ENCODE measurements at regions of chr17 and their contacts with region 1.

Region 1: DNA sequence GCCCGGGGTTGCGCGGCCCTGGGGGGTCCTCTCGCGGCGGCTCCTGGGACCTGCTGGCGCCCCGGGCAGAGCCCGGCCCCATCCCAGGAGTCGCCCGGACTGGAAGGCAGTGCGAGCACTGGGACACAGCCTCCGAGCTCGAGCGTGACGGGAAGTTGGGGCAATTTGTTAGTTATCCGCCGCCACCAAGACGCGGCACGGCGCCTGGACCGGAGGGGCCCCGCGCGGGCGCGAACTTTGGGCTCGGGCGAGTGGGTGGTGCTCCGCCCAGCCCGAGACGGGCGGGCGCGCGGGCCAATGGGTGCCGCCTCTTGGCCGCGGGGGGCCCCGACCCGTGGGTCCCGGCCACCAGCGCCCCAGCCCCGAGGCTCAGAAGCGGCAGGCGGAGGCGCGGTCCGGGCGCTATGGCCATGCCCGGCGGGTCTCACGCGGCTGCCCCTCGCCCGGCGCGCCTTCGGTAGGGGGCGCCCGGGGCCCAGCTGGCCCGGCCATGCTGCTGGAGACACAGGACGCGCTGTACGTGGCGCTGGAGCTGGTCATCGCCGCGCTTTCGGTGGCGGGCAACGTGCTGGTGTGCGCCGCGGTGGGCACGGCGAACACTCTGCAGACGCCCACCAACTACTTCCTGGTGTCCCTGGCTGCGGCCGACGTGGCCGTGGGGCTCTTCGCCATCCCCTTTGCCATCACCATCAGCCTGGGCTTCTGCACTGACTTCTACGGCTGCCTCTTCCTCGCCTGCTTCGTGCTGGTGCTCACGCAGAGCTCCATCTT is at the start of gene ADORA2B:
- DNase-seq: no peak
- H3K4me3 ChIP-seq: peak within 1 kb of the TSS; percentile 57 to 70 (median 64)
- H3K27ac ChIP-seq: peak within 1 kb of the TSS in 1 of 4 donors; percentile 23
- H3K4me1 ChIP-seq: peaks cover 17 to 39% (median 34%) of the 10 kb centered on the region in 4 donors
- H3K27me3 ChIP-seq: peaks cover 0 to 42% (median 4%) of the 10 kb centered on the region in 4 donors
- CTCF ChIP-seq: peak; percentile 33 to 51 (median 39)
- EP300 ChIP-seq: no peak
- POLR2A ChIP-seq: no peak
- total RNA-seq, gene ADORA2B: 0.26 to 0.75 (median 0.37) TPM

Region 2: GRCh38 chr17:15999439-16000350 is 54.8 kb after region 1 on chr17 and contains the starts of genes TTC19 and ZSWIM7:
- intact Hi-C with region 1: loop called (anchors 10 kb)
- DNase-seq: peak; percentile 99
- H3K4me3 ChIP-seq: peak within 1 kb of the TSS; percentile 74 to 93 (median 83)
- H3K27ac ChIP-seq: peak within 1 kb of the TSS; percentile 91 to 98 (median 98)
- H3K4me1 ChIP-seq: peaks cover 17 to 38% (median 33%) of the 10 kb centered on the region in 4 donors
- H3K27me3 ChIP-seq: no peaks in the 10 kb centered on the region
- CTCF ChIP-seq: peak in 1 of 3 experiments; percentile 8
- EP300 ChIP-seq: peak; percentile 55
- POLR2A ChIP-seq: peak; percentile 91
- total RNA-seq, gene TTC19: 40.9 to 56.4 (median 50.5) TPM
- total RNA-seq, gene ZSWIM7: 16.2 to 22.7 (median 17.5) TPM

Measured in esophagus muscularis mucosa (tissue), 4 donors.